Activated CD4-positive, alpha-beta memory T cell treated with anti-CD3 and anti-CD28 coated beads for 36 hours (primary cell): ENCODE measurements at regions of chr6 and their contacts with region 1.

Region 1: GRCh38 chr6:27753668-27754407 is 158.4 kb downstream of the OR2B2 start:
- DNase-seq: peak; percentile 87
- H3K4me3 Mint-ChIP-seq: peak overlapping the region; percentile 83
- H3K27ac Mint-ChIP-seq: peak overlapping the region; percentile 69
- H3K4me1 Mint-ChIP-seq: peaks cover 33% of the 10 kb centered on the region
- H3K27me3 Mint-ChIP-seq: peaks cover 3% of the 10 kb centered on the region

Region 2: GRCh38 chr6:26025894-26026832 is 1727.7 kb before region 1 on chr6:
- CTCF ChIA-PET with region 1: no interaction called
- POLR2A ChIA-PET with region 1: no interaction called
- intact Hi-C with region 1: loop called (anchors 10 kb)
- DNase-seq: peak; percentile 96
- H3K4me3 Mint-ChIP-seq: peak overlapping the region; percentile 87
- H3K27ac Mint-ChIP-seq: peak overlapping the region; percentile 91
- H3K4me1 Mint-ChIP-seq: peaks cover 53% of the 10 kb centered on the region
- H3K27me3 Mint-ChIP-seq: peaks cover 5% of the 10 kb centered on the region

Region 3: GRCh38 chr6:27177485-27178406 is 576.1 kb before region 1 on chr6:
- CTCF ChIA-PET with region 1: interaction called, 4 read pairs
- POLR2A ChIA-PET with region 1: no interaction called
- intact Hi-C with region 1: loop called (anchors 2 kb)
- DNase-seq: peak; percentile 84
- H3K4me3 Mint-ChIP-seq: peak overlapping the region; percentile 88
- H3K27ac Mint-ChIP-seq: peak overlapping the region; percentile 88
- H3K4me1 Mint-ChIP-seq: peaks cover 10% of the 10 kb centered on the region
- H3K27me3 Mint-ChIP-seq: peaks cover 1% of the 10 kb centered on the region

Region 4: DNA sequence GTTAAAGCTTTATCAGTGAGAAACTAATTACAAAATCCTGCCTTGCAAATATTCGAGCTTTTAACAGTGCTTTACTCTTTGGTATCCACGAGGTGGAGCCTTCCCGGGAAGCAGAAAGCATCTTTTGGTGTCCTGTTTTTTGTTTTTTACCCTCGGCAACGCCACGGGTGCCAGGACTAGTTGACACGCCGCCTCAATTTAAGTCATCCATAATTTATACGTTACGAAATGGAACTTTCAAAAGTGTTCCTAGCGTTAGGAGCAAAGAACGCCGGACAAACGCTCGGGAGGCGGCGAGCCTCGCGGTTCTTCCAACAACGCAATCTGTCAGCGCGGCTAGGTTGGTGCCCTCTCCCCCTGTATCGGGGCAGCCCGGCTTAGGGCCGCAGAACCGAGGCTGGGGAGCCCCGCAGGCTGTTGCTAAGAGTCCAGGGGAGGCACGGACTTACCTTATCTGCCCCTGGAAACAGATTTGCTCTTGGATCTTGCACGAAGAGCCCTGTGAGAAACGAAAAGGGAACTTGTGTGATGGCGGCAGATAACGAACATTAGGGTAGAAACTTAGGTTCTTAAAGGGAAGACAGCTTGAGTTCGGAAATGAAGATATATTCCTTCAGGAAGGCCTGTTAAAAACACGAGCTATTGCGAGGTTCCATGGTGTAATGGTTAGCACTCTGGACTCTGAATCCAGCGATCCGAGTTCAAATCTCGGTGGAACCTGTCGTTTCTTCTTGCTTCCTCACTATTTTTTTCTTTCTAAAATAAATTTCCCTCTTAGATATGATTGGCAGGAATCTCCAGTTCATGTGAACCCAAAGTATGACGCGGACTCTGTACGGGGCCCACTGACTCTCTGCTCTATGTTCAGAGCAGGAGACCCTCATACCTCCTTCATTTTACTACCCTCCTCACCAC is 234.7 kb before region 1 on chr6:
- CTCF ChIA-PET with region 1: interaction called, 47 read pairs
- POLR2A ChIA-PET with region 1: interaction called, 7 read pairs
- intact Hi-C with region 1: loop called (anchors 1 kb)
- DNase-seq: peak; percentile 70
- H3K4me3 Mint-ChIP-seq: peak overlapping the region; percentile 79
- H3K27ac Mint-ChIP-seq: peak overlapping the region; percentile 77
- H3K4me1 Mint-ChIP-seq: peaks cover 19% of the 10 kb centered on the region
- H3K27me3 Mint-ChIP-seq: peaks cover 17% of the 10 kb centered on the region

Region 5: DNA sequence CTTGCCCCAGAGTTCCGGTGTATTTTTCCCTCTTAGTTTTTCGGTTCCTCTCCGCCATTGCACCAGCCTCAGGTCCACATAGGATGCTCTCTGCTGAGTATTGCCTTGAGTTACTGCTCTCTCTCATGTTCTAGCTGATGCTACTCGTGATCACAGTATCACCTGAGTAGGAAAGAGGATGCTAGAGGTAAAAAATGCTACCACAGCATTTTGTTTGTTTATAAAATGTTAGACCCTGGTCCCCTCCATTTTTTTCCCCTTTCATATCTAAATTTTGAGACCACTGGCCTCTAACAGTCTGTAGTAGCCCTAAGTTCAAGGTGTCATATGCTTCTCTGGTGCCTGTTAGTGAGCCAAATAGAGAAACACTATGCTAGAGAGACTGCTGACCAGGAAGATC is 17.2 kb before region 1 on chr6:
- CTCF ChIA-PET with region 1: interaction called, 21 read pairs
- POLR2A ChIA-PET with region 1: no interaction called
- intact Hi-C with region 1: loop called (anchors 2 kb)
- DNase-seq: no peak
- H3K4me3 Mint-ChIP-seq: no peak overlapping the region
- H3K27ac Mint-ChIP-seq: no peak overlapping the region
- H3K4me1 Mint-ChIP-seq: peaks cover 11% of the 10 kb centered on the region
- H3K27me3 Mint-ChIP-seq: peaks cover 12% of the 10 kb centered on the region

Region 6: GRCh38 chr6:27809939-27810767 is 56.3 kb after region 1 on chr6:
- CTCF ChIA-PET with region 1: no interaction called
- POLR2A ChIA-PET with region 1: interaction called, 3 read pairs
- intact Hi-C with region 1: loop called (anchors 1 kb)
- DNase-seq: peak; percentile 82
- H3K4me3 Mint-ChIP-seq: peak overlapping the region; percentile 85
- H3K27ac Mint-ChIP-seq: peak overlapping the region; percentile 96
- H3K4me1 Mint-ChIP-seq: peaks cover 61% of the 10 kb centered on the region
- H3K27me3 Mint-ChIP-seq: peaks cover 4% of the 10 kb centered on the region